WTC11 (cell line): ENCODE measurements at regions of chr10 and their contacts with region 1.

Region 1: GRCh38 chr10:98045785-98046389 is 15.5 kb upstream of the CRTAC1 start:
- DNase-seq: peak; percentile 73
- ATAC-seq: peak; percentile 92
- H3K4me3 Mint-ChIP-seq: no peak overlapping the region
- H3K27ac Mint-ChIP-seq: no peak overlapping the region
- H3K4me1 Mint-ChIP-seq: no peaks in the 10 kb centered on the region
- H3K27me3 Mint-ChIP-seq: peaks cover 28% of the 10 kb centered on the region
- CTCF ChIP-seq: peak; percentile 83

Region 2: GRCh38 chr10:97888641-97889262 is 157.1 kb before region 1 on chr10:
- CTCF ChIA-PET with region 1: interaction called, 12 read pairs
- POLR2A ChIA-PET with region 1: no interaction called
- DNase-seq: no peak
- ATAC-seq: peak; percentile 54
- H3K4me3 Mint-ChIP-seq: no peak overlapping the region
- H3K27ac Mint-ChIP-seq: no peak overlapping the region
- H3K4me1 Mint-ChIP-seq: peaks cover 35% of the 10 kb centered on the region
- H3K27me3 Mint-ChIP-seq: no peaks in the 10 kb centered on the region; the same call in 1 of the 2 replicates
- CTCF ChIP-seq: no peak

Region 3: DNA sequence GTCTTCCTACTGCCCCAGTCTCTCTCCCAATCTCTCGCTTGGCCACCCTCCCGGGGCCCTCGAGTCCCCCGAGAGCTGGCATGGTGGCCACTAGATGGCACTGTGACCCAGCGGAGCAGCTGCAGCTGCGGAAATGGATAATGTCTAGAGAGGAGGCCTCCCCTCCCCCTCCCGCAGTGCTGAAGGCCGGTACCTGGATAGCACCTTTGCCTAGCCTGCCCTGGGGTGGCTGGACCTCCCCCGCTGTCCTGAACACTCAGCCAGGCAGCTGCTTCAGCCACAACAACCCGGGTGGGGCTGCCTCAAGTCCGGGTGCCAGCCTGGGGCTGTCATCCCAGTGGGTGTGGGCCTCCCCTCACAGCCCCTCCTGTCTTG is 131.1 kb before region 1 on chr10:
- CTCF ChIA-PET with region 1: interaction called, 71 read pairs
- POLR2A ChIA-PET with region 1: interaction called, 6 read pairs
- DNase-seq: peak; percentile 93
- ATAC-seq: peak; percentile 95
- H3K4me3 Mint-ChIP-seq: no peak overlapping the region
- H3K27ac Mint-ChIP-seq: no peak overlapping the region
- H3K4me1 Mint-ChIP-seq: peaks cover 8% of the 10 kb centered on the region
- H3K27me3 Mint-ChIP-seq: peaks cover 23% of the 10 kb centered on the region
- CTCF ChIP-seq: peak; percentile 86

Region 4: GRCh38 chr10:97974526-97975525 is 71.1 kb before region 1 on chr10:
- CTCF ChIA-PET with region 1: interaction called, 15 read pairs
- POLR2A ChIA-PET with region 1: no interaction called
- DNase-seq: peak; percentile 43
- ATAC-seq: peak; percentile 70
- H3K4me3 Mint-ChIP-seq: peak overlapping the region; percentile 71
- H3K27ac Mint-ChIP-seq: no peak overlapping the region
- H3K4me1 Mint-ChIP-seq: peaks cover 24% of the 10 kb centered on the region
- H3K27me3 Mint-ChIP-seq: peaks cover 43% of the 10 kb centered on the region
- CTCF ChIP-seq: no peak